H1 (cell line): ENCODE measurements at regions of chr7 and their contacts with region 1.

Region 1: DNA sequence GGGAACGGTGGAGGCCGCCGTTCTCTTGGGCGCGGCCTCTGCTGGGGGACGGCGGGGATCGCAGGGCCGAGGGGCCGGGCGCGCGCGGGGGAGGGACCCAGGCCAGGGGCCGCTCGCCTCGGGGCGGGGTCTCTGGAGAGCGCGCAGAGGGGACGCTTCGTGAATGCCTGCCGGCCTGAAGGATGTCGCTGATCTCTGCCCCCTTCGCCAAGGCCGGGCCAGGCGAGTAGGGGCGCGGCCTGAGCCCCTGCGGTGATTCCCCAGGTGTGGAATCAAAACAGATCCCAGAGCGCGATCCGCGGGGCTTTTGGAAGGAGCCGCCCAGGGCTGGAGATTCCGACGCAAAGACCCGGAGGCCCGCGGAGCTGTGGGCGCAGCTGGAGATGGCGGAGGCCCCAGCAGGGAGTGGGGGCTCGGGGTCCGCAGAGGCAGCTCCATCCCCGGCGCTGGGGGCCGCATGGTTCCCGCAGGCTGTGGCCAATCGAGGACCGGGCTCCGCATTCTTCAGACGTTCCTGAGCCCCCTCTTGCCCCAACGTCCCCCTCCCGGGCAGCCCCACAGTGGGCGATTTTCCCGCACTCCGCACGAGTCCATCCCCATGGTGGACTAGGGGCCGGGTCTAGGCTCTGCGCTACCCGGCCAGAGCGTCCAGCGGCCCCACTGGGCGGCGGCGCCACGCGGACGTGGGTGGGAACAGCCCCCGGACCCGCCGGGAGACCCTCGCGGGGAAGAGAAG is 166.0 kb downstream of the ACTR3B start:
- DNase-seq: peak in 1 of 2 experiments; percentile 58
- H3K4me3 ChIP-seq: peak overlapping the region; percentile 58 to 79 (median 62)
- H3K27ac ChIP-seq: no peak overlapping the region
- H3K4me1 ChIP-seq: peaks cover 0 to 7% (median 3%) of the 10 kb centered on the region in 4 experiments; a peak in 4 of 7 replicates
- H3K27me3 ChIP-seq: peaks cover 0 to 25% (median 19%) of the 10 kb centered on the region in 4 experiments; a peak in 6 of 7 replicates
- CTCF ChIP-seq: peak in 1 of 3 experiments; percentile 26; a peak in 2 of 4 replicates
- EP300 ChIP-seq: no peak
- POLR2A ChIP-seq: no peak
- RAD21 ChIP-seq: peak; percentile 10 to 30; a peak in 2 of 4 replicates

Region 2: DNA sequence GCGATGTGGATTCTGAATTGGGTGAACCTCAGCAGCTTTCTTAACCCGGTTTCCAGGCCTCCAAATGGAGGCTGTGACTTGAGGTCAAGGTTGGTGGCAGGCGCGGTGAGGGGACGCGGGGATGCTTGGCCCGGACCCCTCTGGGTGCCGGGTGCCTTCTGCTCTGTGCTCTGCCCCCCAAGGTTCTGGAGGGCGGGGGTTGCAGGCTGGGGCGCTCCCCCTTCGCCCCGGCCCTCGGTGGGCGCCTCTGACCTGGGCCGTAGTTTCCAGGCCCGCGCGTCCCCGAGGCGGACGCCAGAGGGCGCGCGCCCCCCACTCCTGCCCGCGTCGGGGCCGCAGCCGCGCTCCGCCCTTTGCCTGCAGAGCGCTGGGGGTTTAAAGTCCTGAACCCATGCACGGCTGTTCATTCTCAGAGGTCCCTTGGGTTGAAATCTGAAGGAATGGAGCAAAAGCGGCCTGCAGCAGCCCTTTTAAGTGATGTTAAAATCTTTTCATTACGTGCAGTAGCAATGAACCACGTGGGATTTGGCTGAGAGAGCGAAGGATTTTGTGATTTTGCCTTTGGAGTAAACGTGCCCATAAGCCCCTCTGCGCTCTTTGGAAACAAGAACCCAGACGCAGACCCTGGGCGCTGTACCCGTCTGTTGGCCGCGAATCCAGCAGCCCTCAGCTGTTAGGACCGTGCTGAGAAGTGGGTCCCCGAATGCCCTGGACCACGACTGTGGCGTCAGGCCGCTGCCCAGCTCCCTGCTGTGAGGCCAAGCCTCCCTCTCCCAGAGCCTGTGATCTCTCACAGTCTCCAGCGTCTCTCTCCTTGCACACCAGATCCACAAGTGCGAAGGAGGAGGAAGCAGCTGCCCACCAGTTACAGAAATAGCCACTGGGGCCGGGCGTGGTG is 31.1 kb before region 1 on chr7:
- CTCF ChIA-PET with region 1: interaction called, 28 read pairs
- POLR2A ChIA-PET with region 1: interaction called, 4 read pairs
- DNase-seq: peak in 1 of 2 experiments; percentile 85
- H3K4me3 ChIP-seq: no peak overlapping the region
- H3K27ac ChIP-seq: no peak overlapping the region
- H3K4me1 ChIP-seq: peaks cover 0 to 1% (median 0%) of the 10 kb centered on the region in 4 experiments; a peak in 2 of 7 replicates
- H3K27me3 ChIP-seq: no peaks in the 10 kb centered on the region
- CTCF ChIP-seq: peak; percentile 74 to 92 (median 77)
- EP300 ChIP-seq: no peak
- POLR2A ChIP-seq: no peak
- RAD21 ChIP-seq: peak; percentile 94 to 96